Mammary epithelial cell (primary cell): ENCODE measurements at regions of chr3 and their contacts with region 1.

Region 1: GRCh38 chr3:112642912-112643506 is 2.1 kb upstream of the CCDC80 start:
- DNase-seq: peak; percentile 79
- H3K4me3 ChIP-seq: peak overlapping the region in 1 of 3 experiments; percentile 8
- H3K27ac ChIP-seq: peak overlapping the region; percentile 23
- H3K4me1 ChIP-seq: peaks cover 49% of the 10 kb centered on the region
- H3K27me3 ChIP-seq: no peaks in the 10 kb centered on the region
- CTCF ChIP-seq: peak; percentile 88 to 95

Region 2: DNA sequence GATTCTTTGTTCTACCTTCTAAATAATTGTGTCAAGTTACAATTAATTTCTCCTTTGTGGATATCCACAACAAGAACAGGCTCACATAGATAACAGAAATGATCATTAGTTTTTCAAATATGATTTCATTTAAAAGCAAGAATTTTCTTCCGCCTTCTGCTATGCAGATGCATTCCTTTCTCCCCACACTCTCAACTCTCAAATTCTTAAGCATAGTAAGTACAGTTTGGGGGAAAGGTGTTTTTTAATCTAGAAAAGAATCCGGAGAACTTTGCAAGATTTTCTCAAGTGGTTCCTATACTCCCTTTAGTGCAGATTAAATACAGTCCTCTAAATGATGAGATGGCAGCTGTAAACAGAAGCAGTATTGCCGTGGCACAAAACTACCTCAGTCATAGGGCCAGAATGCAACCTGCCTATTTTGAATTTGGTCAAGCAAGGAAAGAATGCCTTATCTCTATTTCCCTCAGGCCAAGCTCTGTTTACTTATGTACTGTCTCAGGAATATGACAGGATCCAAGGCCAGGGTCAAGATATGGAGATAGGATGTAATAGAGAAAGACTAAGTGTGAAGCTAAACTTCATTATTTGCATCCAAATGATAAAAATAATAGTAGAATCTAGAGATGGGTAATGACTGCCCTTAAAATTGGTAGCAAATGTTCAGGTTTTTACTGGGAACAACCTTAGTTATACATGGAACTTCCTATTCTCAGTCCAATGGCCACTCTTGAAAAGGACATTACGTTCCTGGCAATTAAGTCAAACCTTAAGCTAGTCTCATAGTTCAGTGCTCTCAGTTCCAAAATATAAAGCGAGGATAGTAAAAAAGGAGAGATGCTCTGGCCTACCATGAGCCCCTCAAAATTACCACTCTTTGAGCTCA is 861.2 kb before region 1 on chr3:
- CTCF ChIA-PET with region 1: no interaction called
- dilution Hi-C with region 1: no loop called
- in situ Hi-C with region 1: no loop called
- intact Hi-C with region 1: no loop called
- DNase-seq: no peak
- H3K4me3 ChIP-seq: no peak overlapping the region
- H3K27ac ChIP-seq: no peak overlapping the region
- H3K4me1 ChIP-seq: no peaks in the 10 kb centered on the region
- H3K27me3 ChIP-seq: no peaks in the 10 kb centered on the region
- CTCF ChIP-seq: no peak

Region 3: GRCh38 chr3:112293368-112294321 is 349.4 kb before region 1 on chr3 and contains the start of gene SLC9C1:
- CTCF ChIA-PET with region 1: no interaction called
- dilution Hi-C with region 1: no loop called
- in situ Hi-C with region 1: no loop called
- intact Hi-C with region 1: loop called (anchors 5 kb)
- DNase-seq: peak; percentile 81
- H3K4me3 ChIP-seq: peak within 1 kb of the TSS; percentile 38 to 49 (median 47)
- H3K27ac ChIP-seq: peak within 1 kb of the TSS; percentile 63
- H3K4me1 ChIP-seq: peaks cover 6% of the 10 kb centered on the region
- H3K27me3 ChIP-seq: no peaks in the 10 kb centered on the region
- CTCF ChIP-seq: peak; percentile 62 to 73
- total RNA-seq, gene SLC9C1: 0.47 to 1.7 TPM

Region 4: DNA sequence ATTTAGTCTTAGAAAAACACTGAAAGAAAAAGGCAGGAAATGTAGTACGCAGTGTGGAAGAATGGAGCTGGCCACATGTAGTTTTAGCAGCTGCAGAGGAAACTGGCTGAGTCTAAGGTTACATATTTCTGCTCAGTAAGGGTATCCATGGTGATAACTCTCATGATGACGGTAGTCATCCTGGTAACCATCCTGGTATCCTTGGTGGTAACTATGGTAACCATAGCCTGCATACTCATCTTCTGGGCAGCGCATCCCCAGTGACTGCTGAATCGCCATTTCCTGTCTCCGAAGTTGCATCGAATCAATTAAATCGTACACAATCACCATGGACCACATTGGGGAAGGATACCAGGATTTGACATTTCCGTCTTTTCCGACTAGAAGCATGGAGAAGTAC is 37.7 kb before region 1 on chr3:
- CTCF ChIA-PET with region 1: no interaction called
- dilution Hi-C with region 1: no loop called
- in situ Hi-C with region 1: no loop called
- intact Hi-C with region 1: no loop called
- DNase-seq: peak; percentile 22
- H3K4me3 ChIP-seq: no peak overlapping the region
- H3K27ac ChIP-seq: no peak overlapping the region
- H3K4me1 ChIP-seq: no peaks in the 10 kb centered on the region
- H3K27me3 ChIP-seq: no peaks in the 10 kb centered on the region
- CTCF ChIP-seq: no peak

Region 5: DNA sequence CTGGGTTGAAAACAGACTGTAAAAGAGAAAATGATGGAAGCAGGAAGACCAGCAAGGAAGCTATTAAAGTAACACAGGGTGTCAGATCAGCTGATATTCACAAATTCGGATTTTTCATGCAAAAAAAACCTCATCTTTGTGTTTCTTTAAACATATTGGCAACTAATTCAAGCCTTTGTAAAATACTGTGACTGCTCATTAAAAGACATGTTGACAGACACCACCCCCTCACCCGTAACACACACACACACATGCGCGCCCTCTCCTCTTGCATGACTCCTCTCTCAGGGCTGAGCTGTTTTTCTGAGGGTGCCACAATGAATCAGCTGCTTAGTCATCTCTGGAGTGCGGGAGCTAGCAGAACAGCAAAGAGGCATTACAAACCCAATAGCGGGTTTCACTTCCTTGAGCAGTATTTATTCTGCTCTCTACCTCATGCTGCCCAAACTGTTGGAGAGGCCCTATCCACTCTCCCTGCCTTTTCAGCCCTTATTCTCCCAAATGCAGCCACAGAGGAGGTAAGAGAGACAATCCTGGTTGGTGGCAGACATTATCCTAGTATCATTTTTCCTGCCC is 33.7 kb after region 1 on chr3:
- CTCF ChIA-PET with region 1: no interaction called
- dilution Hi-C with region 1: no loop called
- in situ Hi-C with region 1: no loop called
- intact Hi-C with region 1: loop called (anchors 1 kb)
- DNase-seq: peak; percentile 98
- H3K4me3 ChIP-seq: no peak overlapping the region
- H3K27ac ChIP-seq: peak overlapping the region; percentile 83
- H3K4me1 ChIP-seq: peaks cover 32% of the 10 kb centered on the region
- H3K27me3 ChIP-seq: no peaks in the 10 kb centered on the region
- CTCF ChIP-seq: no peak

Region 6: DNA sequence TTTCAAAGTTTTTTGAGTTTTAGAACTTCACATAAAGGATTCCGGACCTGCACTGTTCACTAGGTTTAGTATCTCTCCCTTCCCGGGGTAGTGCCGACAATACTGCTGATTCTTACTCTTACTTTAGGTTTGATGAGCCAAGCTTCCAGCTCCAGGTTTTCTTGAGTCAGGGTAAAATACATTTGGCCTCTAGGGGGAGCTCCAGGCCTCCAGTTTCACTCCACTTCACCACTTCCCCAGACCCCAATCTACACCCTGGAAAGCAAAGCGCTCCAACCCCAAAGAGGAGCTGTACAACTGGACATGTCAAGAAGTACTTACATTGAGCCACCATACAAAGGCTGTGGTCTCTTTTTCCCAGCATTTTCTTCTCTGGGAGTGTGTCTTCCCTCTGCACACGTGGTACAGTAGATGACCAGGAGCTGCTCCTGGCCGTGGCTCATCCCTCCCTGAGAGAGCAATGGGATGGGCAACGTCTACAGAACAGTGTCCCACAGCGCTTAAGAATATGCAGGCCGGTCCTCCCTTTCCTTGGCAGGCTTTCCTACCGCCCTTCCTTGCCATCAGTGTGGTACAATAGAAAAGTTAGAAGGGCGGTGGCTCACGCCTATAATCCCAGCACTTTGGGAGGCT is 91.8 kb after region 1 on chr3:
- CTCF ChIA-PET with region 1: interaction called, 3 read pairs
- dilution Hi-C with region 1: no loop called
- in situ Hi-C with region 1: no loop called
- intact Hi-C with region 1: loop called (anchors 1 kb)
- DNase-seq: peak; percentile 64
- H3K4me3 ChIP-seq: no peak overlapping the region
- H3K27ac ChIP-seq: peak overlapping the region; percentile 12
- H3K4me1 ChIP-seq: peaks cover 32% of the 10 kb centered on the region
- H3K27me3 ChIP-seq: no peaks in the 10 kb centered on the region
- CTCF ChIP-seq: peak; percentile 67 to 81

Region 7: DNA sequence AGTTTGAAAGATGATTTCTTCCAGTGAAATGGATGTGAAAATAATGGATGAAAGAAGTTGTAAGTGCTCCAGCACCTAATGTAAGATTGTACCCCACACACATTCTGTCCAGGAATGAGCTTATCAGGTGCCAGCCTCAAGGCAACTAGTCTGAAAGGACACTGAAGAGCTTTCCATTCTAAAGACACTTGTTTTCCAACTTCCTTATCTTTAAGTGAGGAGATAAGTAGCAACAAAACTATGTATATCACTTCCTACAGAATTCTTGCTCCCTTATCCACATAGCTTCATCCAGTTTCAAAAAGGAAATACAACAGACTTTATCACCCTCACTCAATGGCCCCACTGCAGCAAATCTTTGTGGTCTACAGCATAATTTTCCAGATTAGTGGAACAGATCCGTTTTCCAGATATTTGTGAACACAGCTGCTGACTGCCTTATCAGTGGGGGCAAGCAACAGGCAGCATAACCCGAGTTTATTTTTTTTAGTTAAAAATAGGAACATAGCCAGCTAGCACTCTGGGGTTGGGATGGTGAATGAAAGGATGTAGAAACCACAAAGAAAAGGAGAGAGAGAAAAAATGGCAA is 143.1 kb after region 1 on chr3:
- CTCF ChIA-PET with region 1: no interaction called
- dilution Hi-C with region 1: no loop called
- in situ Hi-C with region 1: no loop called
- intact Hi-C with region 1: no loop called
- DNase-seq: no peak
- H3K4me3 ChIP-seq: no peak overlapping the region
- H3K27ac ChIP-seq: no peak overlapping the region
- H3K4me1 ChIP-seq: no peaks in the 10 kb centered on the region
- H3K27me3 ChIP-seq: no peaks in the 10 kb centered on the region
- CTCF ChIP-seq: no peak

Region 8: GRCh38 chr3:112979240-112979832 is 336.3 kb after region 1 on chr3:
- CTCF ChIA-PET with region 1: interaction called, 4 read pairs
- dilution Hi-C with region 1: loop called (anchors 5 kb)
- in situ Hi-C with region 1: loop called in 1 of 2 experiments (anchors 10 kb)
- intact Hi-C with region 1: loop called (anchors 1 kb)
- DNase-seq: peak; percentile 5
- H3K4me3 ChIP-seq: no peak overlapping the region
- H3K27ac ChIP-seq: no peak overlapping the region
- H3K4me1 ChIP-seq: no peaks in the 10 kb centered on the region
- H3K27me3 ChIP-seq: no peaks in the 10 kb centered on the region
- CTCF ChIP-seq: peak; percentile 56 to 58

Region 9: GRCh38 chr3:113035387-113035982 is 392.5 kb after region 1 on chr3:
- CTCF ChIA-PET with region 1: no interaction called
- dilution Hi-C with region 1: no loop called
- in situ Hi-C with region 1: no loop called
- intact Hi-C with region 1: loop called (anchors 5 kb)
- DNase-seq: peak; percentile 54
- H3K4me3 ChIP-seq: no peak overlapping the region
- H3K27ac ChIP-seq: no peak overlapping the region
- H3K4me1 ChIP-seq: no peaks in the 10 kb centered on the region
- H3K27me3 ChIP-seq: no peaks in the 10 kb centered on the region
- CTCF ChIP-seq: peak; percentile 91 to 95